CD8-positive, alpha-beta memory T cell (primary cell): ENCODE measurements at regions of chr17 and their contacts with region 1.

Region 1: GRCh38 chr17:31524926-31525800 is 133.7 kb downstream of the RAB11FIP4 start:
- DNase-seq: peak; percentile 69 to 87 (median 82)
- H3K4me3 ChIP-seq: no peak overlapping the region
- H3K4me3 Mint-ChIP-seq: no peak overlapping the region
- H3K27ac ChIP-seq: no peak overlapping the region
- H3K27ac Mint-ChIP-seq: peak overlapping the region in 2 of 8 donors; percentile 20 to 43
- H3K4me1 ChIP-seq: no peaks in the 10 kb centered on the region
- H3K4me1 Mint-ChIP-seq: no peaks in the 10 kb centered on the region
- H3K27me3 ChIP-seq: no peaks in the 10 kb centered on the region
- H3K27me3 Mint-ChIP-seq: no peaks in the 10 kb centered on the region

Region 2: DNA sequence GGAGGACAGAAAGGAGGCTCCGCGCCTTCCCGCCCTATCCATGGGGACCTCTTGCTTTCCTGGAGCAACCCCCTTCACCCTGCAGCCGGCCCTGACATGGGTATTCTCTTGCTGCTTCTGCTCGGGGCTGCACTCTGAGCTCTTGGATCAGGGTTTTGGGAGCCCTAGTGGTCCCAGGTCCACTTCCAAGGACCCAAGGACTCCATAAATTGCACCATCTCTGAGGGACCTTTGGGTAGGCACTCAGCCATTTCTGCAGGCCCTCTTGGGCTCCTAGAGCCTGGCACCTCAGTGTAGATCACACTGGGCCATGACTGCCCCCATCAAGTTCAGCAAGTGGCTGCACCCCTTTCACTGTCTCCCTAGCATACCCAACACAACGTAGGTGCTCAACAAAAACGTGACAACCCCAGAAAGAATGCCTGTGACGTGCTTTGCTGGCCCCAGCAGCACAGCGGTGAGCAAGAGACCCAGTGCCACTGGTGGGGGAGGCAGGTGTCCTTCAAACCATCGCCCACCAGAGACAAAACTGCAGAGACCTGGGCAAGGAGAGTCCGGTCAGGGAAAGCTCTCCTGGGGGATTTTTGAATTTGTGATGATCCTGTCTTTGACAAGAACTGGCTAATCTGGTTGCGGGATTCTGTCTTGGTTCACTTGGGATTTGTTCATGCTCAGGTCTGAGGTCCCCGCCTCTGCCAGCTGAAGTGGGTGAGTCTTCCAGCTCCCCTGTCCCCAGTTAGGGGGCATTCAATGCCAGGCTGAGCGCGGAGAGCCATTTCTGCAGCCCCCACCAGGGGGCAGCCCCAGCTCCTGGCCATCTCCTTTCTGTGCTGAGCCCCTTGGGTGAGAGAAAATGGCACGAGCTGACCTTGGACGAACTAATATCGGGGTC is 136.1 kb before region 1 on chr17:
- CTCF ChIA-PET with region 1: interaction called, 15 read pairs
- POLR2A ChIA-PET with region 1: no interaction called
- DNase-seq: peak in 4 of 5 donors; percentile 17 to 46 (median 24)
- H3K4me3 ChIP-seq: no peak overlapping the region
- H3K4me3 Mint-ChIP-seq: peak overlapping the region in 1 of 7 donors; percentile 28
- H3K27ac ChIP-seq: no peak overlapping the region
- H3K27ac Mint-ChIP-seq: no peak overlapping the region
- H3K4me1 ChIP-seq: no peaks in the 10 kb centered on the region
- H3K4me1 Mint-ChIP-seq: peaks cover 0 to 12% (median 9%) of the 10 kb centered on the region in 3 donors
- H3K27me3 ChIP-seq: peaks cover 24% of the 10 kb centered on the region
- H3K27me3 Mint-ChIP-seq: peaks cover 29 to 34% of the 10 kb centered on the region in 2 donors

Region 3: GRCh38 chr17:31433091-31433790 is 91.9 kb before region 1 on chr17:
- CTCF ChIA-PET with region 1: interaction called, 117 read pairs
- POLR2A ChIA-PET with region 1: interaction called, 4 read pairs
- DNase-seq: peak; percentile 31 to 66 (median 37)
- H3K4me3 ChIP-seq: no peak overlapping the region
- H3K4me3 Mint-ChIP-seq: peak overlapping the region in 5 of 7 donors; percentile 4 to 45 (median 43)
- H3K27ac ChIP-seq: no peak overlapping the region
- H3K27ac Mint-ChIP-seq: peak overlapping the region in 6 of 8 donors; percentile 2 to 80 (median 40)
- H3K4me1 ChIP-seq: peaks cover 15% of the 10 kb centered on the region
- H3K4me1 Mint-ChIP-seq: peaks cover 14 to 25% (median 19%) of the 10 kb centered on the region in 3 donors
- H3K27me3 ChIP-seq: no peaks in the 10 kb centered on the region
- H3K27me3 Mint-ChIP-seq: peaks cover 9 to 25% of the 10 kb centered on the region in 2 donors

Region 4: DNA sequence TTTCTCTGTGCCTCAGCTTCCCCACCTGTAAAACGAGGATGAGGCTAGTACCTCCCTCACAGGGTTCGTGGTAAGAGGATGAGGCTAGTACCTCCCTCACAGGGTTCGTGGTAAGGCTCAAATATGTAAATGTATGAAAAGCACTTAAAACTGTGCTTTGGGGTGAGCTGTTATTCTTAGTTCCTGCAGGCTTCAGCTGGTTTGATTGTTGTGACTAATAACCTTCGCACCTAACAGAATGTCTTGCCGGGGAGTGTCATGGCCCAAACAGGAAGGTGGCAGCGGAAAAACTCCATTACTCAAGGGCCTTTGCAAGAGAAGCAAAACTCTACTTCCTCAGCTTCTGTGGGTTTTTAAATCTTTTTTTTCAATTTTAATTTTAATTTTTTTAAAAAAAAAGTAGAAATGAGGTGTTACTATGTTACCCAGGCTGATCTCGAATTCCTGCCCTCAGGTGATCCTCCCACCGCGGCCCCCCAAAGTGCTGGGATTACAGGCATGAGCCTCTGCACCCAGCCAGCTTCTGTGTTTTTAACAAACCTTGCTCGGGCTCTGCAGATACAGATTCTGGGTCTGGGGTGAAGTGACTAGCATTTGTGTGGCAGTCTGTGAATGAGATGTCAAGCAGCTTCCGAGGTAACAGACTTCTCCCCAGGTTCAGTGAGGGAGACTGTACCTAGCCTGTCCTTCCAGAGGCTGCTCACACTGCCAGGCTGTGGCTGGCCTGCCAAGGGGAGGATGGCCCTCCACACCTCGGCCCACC is 30.7 kb before region 1 on chr17:
- CTCF ChIA-PET with region 1: interaction called, 10 read pairs
- POLR2A ChIA-PET with region 1: interaction called, 4 read pairs
- DNase-seq: peak; percentile 46 to 83 (median 75)
- H3K4me3 ChIP-seq: peak overlapping the region; percentile 46
- H3K4me3 Mint-ChIP-seq: peak overlapping the region; percentile 54 to 91 (median 79)
- H3K27ac ChIP-seq: peak overlapping the region; percentile 46
- H3K27ac Mint-ChIP-seq: peak overlapping the region; percentile 87 to 99 (median 97)
- H3K4me1 ChIP-seq: peaks cover 87% of the 10 kb centered on the region
- H3K4me1 Mint-ChIP-seq: peaks cover 81 to 100% (median 87%) of the 10 kb centered on the region in 3 donors
- H3K27me3 ChIP-seq: no peaks in the 10 kb centered on the region
- H3K27me3 Mint-ChIP-seq: no peaks in the 10 kb centered on the region